ENCODE measurements at regions of chr17 and their contacts with region 1.

Region 1: DNA sequence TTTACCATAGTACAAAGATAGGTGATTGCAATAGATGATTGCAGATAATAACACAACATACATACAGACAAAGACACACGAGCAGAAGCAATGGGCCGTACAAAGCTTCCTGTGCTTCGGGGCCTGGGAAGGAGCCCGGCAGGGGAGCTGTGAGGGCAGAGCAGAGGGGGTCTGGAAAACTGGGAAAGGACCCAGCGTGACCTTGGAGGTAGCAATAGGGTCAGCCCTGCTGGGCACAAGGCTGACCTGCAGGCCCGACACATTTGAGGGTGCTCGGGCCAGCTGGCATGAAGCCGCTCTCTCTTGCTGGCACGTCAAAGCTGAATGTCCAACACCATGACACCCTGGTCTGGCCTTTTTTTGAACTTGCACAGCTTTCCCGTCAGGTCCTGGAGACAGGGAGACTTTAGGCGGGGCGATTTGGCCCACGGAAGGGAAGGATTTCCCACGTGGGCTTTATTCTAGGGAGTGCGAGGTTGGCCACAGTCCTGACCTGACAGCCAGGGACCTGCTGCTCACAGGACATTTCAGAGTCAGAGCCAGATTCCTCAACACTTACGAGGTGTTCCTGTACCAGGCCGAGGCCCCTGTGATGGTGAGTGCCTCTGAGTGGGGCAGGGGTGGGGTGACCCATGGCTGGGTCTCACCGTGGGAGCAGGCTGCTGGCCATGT is 83.2 kb downstream of the NTN1 start:
- DNase-seq: no peak
- H3K4me3 ChIP-seq: no peak overlapping the region
- H3K27ac ChIP-seq: peak overlapping the region in 1 of 4 donors; percentile 86
- H3K4me1 ChIP-seq: peaks cover 0 to 12% (median 7%) of the 10 kb centered on the region in 4 donors
- H3K27me3 ChIP-seq: no peaks in the 10 kb centered on the region
- CTCF ChIP-seq: no peak
- EP300 ChIP-seq: no peak
- POLR2A ChIP-seq: no peak

Region 2: GRCh38 chr17:8900626-8901585 is 203.6 kb before region 1 on chr17:
- intact Hi-C with region 1: loop called (anchors 10 kb)
- DNase-seq: no peak
- H3K4me3 ChIP-seq: no peak overlapping the region
- H3K27ac ChIP-seq: no peak overlapping the region
- H3K4me1 ChIP-seq: no peaks in the 10 kb centered on the region
- H3K27me3 ChIP-seq: peaks cover 0 to 18% (median 0%) of the 10 kb centered on the region in 3 donors
- CTCF ChIP-seq: no peak
- EP300 ChIP-seq: no peak
- POLR2A ChIP-seq: no peak

Region 3: GRCh38 chr17:9009737-9010136 is 94.8 kb before region 1 on chr17:
- intact Hi-C with region 1: loop called (anchors 5 kb)
- DNase-seq: no peak
- H3K4me3 ChIP-seq: no peak overlapping the region
- H3K27ac ChIP-seq: peak overlapping the region in 1 of 4 donors; percentile 42
- H3K4me1 ChIP-seq: peaks cover 0 to 35% (median 20%) of the 10 kb centered on the region in 4 donors
- H3K27me3 ChIP-seq: no peaks in the 10 kb centered on the region
- CTCF ChIP-seq: no peak
- EP300 ChIP-seq: no peak
- POLR2A ChIP-seq: no peak

Region 4: DNA sequence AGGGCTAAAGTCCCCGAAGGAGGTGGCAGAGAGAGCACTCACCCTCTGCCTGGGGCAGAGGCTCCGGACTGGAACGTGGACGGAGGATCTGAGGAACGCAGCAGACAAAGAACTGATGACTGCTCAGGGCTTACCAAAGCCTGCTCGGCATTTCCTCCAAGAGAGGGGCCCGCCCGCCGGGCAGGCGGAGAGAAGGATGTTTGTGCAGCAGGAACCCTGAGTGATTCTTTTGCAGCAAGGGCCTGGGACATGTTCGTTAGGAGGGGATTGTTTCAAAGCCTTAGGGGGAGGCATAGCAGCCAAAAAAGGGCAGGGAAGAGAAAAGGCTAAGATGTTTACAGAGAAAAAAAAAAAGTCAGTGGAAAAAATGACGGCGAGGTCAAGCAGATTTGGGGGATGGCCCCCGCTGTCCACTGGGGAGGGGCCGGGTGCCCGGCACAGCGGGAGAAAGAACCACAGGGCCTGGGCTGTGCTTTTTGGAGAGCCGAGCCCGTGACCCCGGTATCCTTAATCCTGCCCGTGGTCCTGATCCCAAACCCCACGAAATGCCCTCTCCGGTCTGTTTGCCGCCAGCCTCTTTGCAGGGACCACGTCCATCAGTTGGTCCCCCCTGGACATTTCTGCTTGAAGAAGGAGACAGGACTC is 46.1 kb after region 1 on chr17:
- intact Hi-C with region 1: no loop called
- DNase-seq: no peak
- H3K4me3 ChIP-seq: no peak overlapping the region
- H3K27ac ChIP-seq: peak overlapping the region in 3 of 4 donors; percentile 25 to 56 (median 29)
- H3K4me1 ChIP-seq: peaks cover 0 to 26% (median 7%) of the 10 kb centered on the region in 4 donors
- H3K27me3 ChIP-seq: no peaks in the 10 kb centered on the region
- CTCF ChIP-seq: no peak
- EP300 ChIP-seq: no peak
- POLR2A ChIP-seq: no peak

Region 5: DNA sequence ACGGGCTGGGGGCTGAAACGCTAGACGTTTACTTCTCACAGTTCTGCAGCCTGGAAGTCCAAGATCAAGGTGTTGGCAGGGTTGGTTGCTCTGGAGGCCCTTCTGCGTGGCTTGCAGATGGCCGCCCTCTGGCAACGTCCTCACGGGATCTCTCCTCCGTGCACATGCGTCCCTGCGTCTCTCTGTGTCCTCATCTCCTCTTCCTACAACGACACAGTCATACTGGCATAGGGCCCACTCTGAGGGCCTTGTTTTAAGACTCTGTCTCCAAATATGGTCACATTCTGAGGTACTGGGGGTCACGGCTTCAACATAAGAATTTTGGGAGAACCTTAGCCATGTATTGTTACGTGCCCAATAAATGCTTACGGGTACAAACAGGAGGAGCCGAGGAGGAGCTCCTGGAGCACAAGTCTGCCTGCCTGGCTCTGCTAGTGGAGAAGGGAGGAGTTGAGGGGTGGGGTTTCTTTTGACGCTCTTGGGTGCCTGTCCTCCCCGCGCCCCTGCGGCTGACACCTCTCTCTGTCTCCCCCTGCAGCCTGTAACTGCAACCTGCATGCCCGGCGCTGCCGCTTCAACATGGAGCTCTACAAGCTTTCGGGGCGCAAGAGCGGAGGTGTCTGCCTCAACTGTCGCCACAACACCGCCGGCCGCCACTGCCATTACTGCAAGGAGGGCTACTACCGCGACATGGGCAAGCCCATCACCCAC is 57.9 kb after region 1 on chr17:
- intact Hi-C with region 1: no loop called
- DNase-seq: no peak
- H3K4me3 ChIP-seq: no peak overlapping the region
- H3K27ac ChIP-seq: peak overlapping the region in 2 of 4 donors; percentile 18 to 36
- H3K4me1 ChIP-seq: peaks cover 0 to 14% (median 9%) of the 10 kb centered on the region in 4 donors
- H3K27me3 ChIP-seq: no peaks in the 10 kb centered on the region
- CTCF ChIP-seq: no peak
- EP300 ChIP-seq: no peak
- POLR2A ChIP-seq: no peak

Measured in sigmoid colon (tissue), 7 donors.